Calu3 (cell line): ENCODE measurements at regions of chr6 and their contacts with region 1.

Region 1: DNA sequence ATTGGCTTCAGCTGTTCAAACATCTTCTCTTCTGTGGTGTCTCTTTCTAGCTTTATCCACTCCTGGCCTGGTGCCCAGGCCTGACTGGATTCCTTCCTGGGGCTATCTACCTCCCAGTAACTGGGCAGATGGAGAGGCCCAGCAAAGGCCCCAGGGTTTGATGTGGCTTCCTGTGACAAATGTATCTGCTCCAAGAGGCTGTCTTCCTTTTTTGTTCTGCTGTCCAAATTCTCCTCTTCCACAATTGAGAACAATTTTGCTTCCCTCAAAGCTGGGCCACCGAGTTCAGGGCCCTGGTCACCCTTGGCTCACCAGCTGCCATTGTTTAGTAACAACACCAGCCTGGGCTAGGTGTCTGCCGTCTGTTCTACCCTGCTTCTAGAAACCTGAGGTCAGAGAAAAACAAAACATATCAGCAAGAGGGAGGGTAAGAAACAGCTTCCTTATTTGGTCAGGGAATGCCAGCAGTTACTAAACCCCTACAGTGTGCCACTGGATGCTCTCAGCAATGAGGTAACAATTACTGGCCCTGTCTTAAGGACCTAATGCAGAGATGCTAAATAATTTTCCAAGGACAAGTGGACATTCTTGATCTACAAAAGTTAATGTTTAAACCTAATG is 3.9 kb downstream of the ZFP57 start:
- DNase-seq: peak; percentile 27
- H3K4me3 Mint-ChIP-seq: no peak overlapping the region
- H3K27ac Mint-ChIP-seq: peak overlapping the region; percentile 79
- H3K4me1 Mint-ChIP-seq: peaks cover 34% of the 10 kb centered on the region
- H3K27me3 Mint-ChIP-seq: peaks cover 8% of the 10 kb centered on the region
- CTCF ChIP-seq: no peak

Region 2: DNA sequence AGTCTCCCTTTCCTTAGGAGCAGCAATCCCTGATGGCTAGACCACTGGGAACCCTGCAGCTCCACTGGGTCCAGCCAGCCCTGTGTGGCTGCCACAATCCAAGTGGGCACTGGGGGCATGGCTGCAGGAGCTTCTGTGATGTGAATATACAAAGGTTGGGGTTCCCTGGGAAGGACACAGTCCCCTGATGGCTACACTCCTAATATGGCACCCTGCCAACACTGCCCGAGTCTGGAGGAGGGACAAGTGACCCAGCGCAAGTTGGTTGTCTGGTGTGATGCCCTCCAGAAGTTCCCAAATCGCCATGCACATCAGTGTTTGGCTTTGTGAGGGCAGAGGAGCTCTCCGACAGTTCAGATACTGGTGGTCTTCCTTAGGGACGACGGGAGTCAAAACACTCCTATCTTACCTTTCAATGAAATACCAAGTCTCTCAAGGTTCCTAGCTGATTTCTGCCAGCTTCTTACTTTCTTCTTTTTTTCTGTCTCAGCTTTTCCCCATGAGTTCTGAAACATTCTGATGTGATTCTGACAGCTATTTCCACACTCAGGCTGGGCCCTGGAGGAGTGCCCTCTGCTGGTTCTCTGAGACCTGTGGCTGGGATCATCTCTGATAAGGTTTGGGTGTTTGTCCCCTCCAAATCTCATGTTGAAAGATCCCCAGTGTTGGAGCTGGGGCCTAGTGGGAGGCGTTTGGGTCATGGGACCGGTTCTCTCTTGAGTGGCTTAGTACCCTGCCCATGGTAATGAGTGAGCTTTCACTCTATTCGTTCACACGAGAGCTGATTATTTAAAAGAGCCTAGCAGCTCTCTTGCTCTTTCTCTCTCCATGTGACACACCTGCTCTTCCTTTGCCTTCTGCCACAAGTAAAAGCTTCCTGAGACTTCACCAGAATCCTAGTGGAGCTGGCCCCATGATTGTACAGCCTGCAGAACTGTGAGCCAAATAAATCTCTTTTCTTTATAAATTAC is 19.3 kb after region 1 on chr6:
- CTCF ChIA-PET with region 1: interaction called, 19 read pairs
- intact Hi-C with region 1: no loop called
- DNase-seq: peak; percentile 64
- H3K4me3 Mint-ChIP-seq: no peak overlapping the region
- H3K27ac Mint-ChIP-seq: no peak overlapping the region
- H3K4me1 Mint-ChIP-seq: peaks cover 8% of the 10 kb centered on the region
- H3K27me3 Mint-ChIP-seq: no peaks in the 10 kb centered on the region
- CTCF ChIP-seq: peak; percentile 83